Calu3 (cell line): ENCODE measurements at regions of chr5 and their contacts with region 1.

Region 1: DNA sequence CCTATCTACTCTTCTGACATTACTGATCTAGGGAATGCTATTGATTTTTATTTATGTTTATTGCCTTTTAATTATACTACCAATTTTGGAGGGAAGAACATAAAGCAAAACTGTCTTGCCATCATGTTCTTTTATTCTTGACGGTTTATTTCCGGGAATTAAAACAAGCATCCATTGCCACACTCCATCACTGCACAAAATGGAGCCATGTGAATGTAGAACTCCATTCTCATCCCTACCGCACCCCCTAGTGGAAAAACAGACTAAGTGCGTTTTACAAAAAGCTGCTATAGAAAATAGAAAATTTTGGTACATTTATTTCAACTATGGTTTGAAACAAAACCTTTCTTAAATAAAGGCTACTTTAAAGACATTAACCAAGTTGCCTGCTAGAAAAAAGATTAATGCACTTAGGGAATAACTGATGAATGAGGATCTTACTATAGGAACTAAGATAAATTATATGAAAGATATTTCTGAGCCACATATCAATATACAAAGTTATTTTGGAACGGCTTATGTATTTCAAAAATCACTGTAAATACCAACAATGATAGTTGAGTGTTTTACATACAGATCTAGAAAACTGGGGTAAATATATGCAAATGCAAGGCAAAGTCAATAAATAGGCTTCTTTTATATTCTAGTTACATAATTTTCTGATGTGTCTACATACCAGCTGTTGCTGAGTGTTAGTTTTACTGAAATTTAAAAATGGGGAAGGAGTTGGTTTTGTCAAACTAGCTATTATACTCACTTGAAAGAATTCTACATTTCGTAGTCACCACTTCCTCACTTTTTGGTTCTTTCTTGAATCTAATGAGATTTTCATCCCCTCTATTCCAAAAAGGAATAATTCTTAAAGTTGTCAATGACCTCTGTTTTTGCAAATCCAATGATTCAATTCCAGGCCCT is 26.5 kb downstream of the OXCT1 start:
- DNase-seq: peak; percentile 59
- H3K4me3 Mint-ChIP-seq: no peak overlapping the region
- H3K27ac Mint-ChIP-seq: no peak overlapping the region
- H3K4me1 Mint-ChIP-seq: peaks cover 13% of the 10 kb centered on the region
- H3K27me3 Mint-ChIP-seq: no peaks in the 10 kb centered on the region
- CTCF ChIP-seq: peak; percentile 76

Region 2: GRCh38 chr5:41270423-41271251 is 573.1 kb before region 1 on chr5:
- CTCF ChIA-PET with region 1: no interaction called
- intact Hi-C with region 1: loop called (anchors 2 kb)
- DNase-seq: peak; percentile 51
- H3K4me3 Mint-ChIP-seq: no peak overlapping the region
- H3K27ac Mint-ChIP-seq: no peak overlapping the region
- H3K4me1 Mint-ChIP-seq: peaks cover 8% of the 10 kb centered on the region
- H3K27me3 Mint-ChIP-seq: peaks cover 13% of the 10 kb centered on the region
- CTCF ChIP-seq: peak; percentile 52

Region 3: DNA sequence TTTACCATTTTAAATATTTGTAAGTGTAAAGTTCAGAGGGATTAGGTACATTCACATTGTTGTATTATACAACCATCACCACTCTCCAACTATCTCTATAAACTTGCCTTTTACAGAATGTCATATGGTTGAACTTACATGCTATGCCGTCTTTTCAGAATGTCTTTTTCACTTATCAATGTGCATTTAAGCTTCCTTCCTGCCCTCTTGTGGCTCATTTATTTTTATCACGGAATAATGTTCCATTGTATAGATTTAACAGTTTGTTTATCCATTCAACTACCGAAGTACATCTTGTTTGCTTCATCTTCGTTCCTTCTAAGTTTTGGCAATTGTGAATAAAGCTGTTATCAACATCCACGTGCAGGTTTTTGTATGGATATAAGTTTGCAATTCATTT is 497.1 kb before region 1 on chr5:
- CTCF ChIA-PET with region 1: no interaction called
- intact Hi-C with region 1: loop called (anchors 5 kb)
- DNase-seq: no peak
- H3K4me3 Mint-ChIP-seq: no peak overlapping the region
- H3K27ac Mint-ChIP-seq: no peak overlapping the region
- H3K4me1 Mint-ChIP-seq: no peaks in the 10 kb centered on the region
- H3K27me3 Mint-ChIP-seq: peaks cover 29% of the 10 kb centered on the region
- CTCF ChIP-seq: no peak

Region 4: DNA sequence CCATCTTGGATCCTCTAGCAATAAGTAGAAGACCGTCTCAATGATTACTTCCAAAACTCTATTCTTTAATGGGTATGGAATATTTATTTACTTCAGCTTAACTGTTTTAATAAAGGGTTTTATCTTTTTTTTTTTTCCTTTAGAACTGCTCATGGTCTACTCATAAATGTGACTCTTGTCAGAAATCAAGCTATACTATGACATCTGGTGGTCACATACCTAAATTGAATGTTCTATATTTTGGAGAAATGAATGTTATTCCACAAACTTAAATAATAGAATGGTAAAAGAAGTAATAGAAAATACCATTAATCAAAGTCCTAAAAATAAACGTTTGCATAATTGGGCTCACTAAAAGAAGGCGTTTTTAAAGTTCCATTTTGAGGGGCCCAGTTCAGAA is 202.1 kb before region 1 on chr5:
- CTCF ChIA-PET with region 1: no interaction called
- intact Hi-C with region 1: loop called (anchors 2 kb)
- DNase-seq: no peak
- H3K4me3 Mint-ChIP-seq: no peak overlapping the region
- H3K27ac Mint-ChIP-seq: no peak overlapping the region
- H3K4me1 Mint-ChIP-seq: no peaks in the 10 kb centered on the region
- H3K27me3 Mint-ChIP-seq: no peaks in the 10 kb centered on the region
- CTCF ChIP-seq: no peak

Region 5: DNA sequence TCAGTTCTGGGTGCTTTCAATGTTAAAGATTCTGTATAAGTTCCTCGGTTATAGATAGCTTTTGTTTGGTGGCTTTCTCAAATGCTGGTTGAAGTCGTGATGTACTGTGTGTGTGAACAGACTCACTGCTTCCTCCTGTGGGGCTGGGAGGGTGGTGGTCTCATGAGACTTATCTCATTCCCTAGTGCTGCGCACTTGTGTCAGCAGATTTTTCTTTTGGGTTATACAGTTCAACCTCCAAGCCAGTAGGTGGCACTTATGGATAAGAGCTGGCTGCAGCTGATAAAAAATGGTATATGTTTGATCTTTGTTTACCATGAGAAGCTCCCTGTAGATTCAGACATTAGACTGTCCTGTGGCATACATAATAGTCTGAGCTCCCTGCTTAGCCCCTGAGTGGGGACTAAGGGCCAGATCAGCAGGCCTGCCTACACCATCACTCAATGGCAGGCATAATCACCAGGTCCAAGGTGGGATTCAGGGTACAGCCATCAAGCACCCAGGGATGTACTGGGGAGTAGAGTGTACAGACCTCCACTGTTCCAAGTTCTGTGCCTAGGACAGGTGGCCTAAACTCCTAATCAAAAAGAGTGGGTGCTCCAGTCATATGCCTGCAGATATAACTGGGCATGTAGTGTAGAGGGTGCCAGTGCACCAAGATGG is 147.7 kb before region 1 on chr5:
- CTCF ChIA-PET with region 1: interaction called, 8 read pairs
- intact Hi-C with region 1: loop called (anchors 1 kb)
- DNase-seq: no peak
- H3K4me3 Mint-ChIP-seq: no peak overlapping the region
- H3K27ac Mint-ChIP-seq: no peak overlapping the region
- H3K4me1 Mint-ChIP-seq: no peaks in the 10 kb centered on the region
- H3K27me3 Mint-ChIP-seq: no peaks in the 10 kb centered on the region
- CTCF ChIP-seq: no peak

Region 6: GRCh38 chr5:41707853-41708603 is 135.7 kb before region 1 on chr5:
- CTCF ChIA-PET with region 1: interaction called, 5 read pairs
- intact Hi-C with region 1: loop called (anchors 1 kb)
- DNase-seq: no peak
- H3K4me3 Mint-ChIP-seq: no peak overlapping the region
- H3K27ac Mint-ChIP-seq: no peak overlapping the region
- H3K4me1 Mint-ChIP-seq: no peaks in the 10 kb centered on the region
- H3K27me3 Mint-ChIP-seq: no peaks in the 10 kb centered on the region
- CTCF ChIP-seq: no peak